ENCODE measurements at regions of chr2 and their contacts with region 1.

Region 1: DNA sequence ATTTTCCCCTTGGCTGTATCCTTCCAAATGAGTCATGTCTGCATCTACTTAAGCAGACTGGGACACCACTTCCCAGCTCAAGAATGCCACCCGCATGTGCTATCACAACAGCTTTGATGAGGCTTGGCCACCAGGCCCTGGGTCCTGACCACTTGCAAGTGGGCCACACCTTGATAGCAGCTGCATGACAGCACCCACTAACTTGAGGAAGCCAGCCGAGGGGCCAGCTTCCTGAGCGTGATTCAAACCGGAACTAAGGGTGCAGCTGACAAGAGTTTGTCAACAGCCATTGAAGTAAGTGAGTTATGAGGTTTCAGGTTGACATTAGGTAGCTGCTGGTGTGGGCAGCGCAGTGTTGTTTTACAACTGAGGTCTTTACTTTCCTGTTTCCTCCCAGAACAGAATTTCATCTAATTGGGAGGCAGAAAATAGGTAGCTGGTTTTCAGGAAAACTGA is 54.4 kb downstream of the EPHA4 start:
- DNase-seq: no peak
- H3K4me3 ChIP-seq: no peak overlapping the region
- H3K27ac ChIP-seq: no peak overlapping the region
- H3K4me1 ChIP-seq: no peaks in the 10 kb centered on the region
- H3K27me3 ChIP-seq: no peaks in the 10 kb centered on the region
- CTCF ChIP-seq: no peak
- POLR2A ChIP-seq: no peak

Region 2: GRCh38 chr2:221529943-221530652 is 12.4 kb after region 1 on chr2:
- intact Hi-C with region 1: loop called (anchors 1 kb)
- DNase-seq: no peak
- H3K4me3 ChIP-seq: peak overlapping the region in 1 of 3 donors; percentile 43
- H3K27ac ChIP-seq: peak overlapping the region; percentile 48 to 57
- H3K4me1 ChIP-seq: no peaks in the 10 kb centered on the region
- H3K27me3 ChIP-seq: no peaks in the 10 kb centered on the region
- CTCF ChIP-seq: no peak
- POLR2A ChIP-seq: no peak